ENCODE measurements at regions of chr12 and their contacts with region 1.

Region 1: GRCh38 chr12:90299121-90299520 is 590.5 kb upstream of the ATP2B1 start:
- DNase-seq: no peak
- H3K4me3 Mint-ChIP-seq: peak overlapping the region; percentile 25
- H3K27ac Mint-ChIP-seq: no peak overlapping the region
- H3K4me1 Mint-ChIP-seq: peaks cover 19% of the 10 kb centered on the region
- H3K27me3 Mint-ChIP-seq: peaks cover 15% of the 10 kb centered on the region

Region 2: GRCh38 chr12:90188857-90189256 is 110.3 kb before region 1 on chr12:
- CTCF ChIA-PET with region 1: no interaction called
- POLR2A ChIA-PET with region 1: no interaction called
- intact Hi-C with region 1: no loop called
- DNase-seq: no peak
- H3K4me3 Mint-ChIP-seq: no peak overlapping the region
- H3K27ac Mint-ChIP-seq: no peak overlapping the region
- H3K4me1 Mint-ChIP-seq: no peaks in the 10 kb centered on the region
- H3K27me3 Mint-ChIP-seq: peaks cover 3% of the 10 kb centered on the region

Region 3: GRCh38 chr12:90280564-90281058 is 18.5 kb before region 1 on chr12:
- CTCF ChIA-PET with region 1: no interaction called
- POLR2A ChIA-PET with region 1: interaction called, 4 read pairs
- intact Hi-C with region 1: loop called (anchors 1 kb)
- DNase-seq: peak; percentile 37
- H3K4me3 Mint-ChIP-seq: no peak overlapping the region
- H3K27ac Mint-ChIP-seq: peak overlapping the region; percentile 13
- H3K4me1 Mint-ChIP-seq: peaks cover 16% of the 10 kb centered on the region
- H3K27me3 Mint-ChIP-seq: peaks cover 5% of the 10 kb centered on the region

Region 4: GRCh38 chr12:90896164-90896563 is 597.0 kb after region 1 on chr12:
- CTCF ChIA-PET with region 1: no interaction called
- POLR2A ChIA-PET with region 1: no interaction called
- intact Hi-C with region 1: no loop called
- DNase-seq: no peak
- H3K4me3 Mint-ChIP-seq: no peak overlapping the region
- H3K27ac Mint-ChIP-seq: no peak overlapping the region
- H3K4me1 Mint-ChIP-seq: no peaks in the 10 kb centered on the region
- H3K27me3 Mint-ChIP-seq: peaks cover 8% of the 10 kb centered on the region

Region 5: DNA sequence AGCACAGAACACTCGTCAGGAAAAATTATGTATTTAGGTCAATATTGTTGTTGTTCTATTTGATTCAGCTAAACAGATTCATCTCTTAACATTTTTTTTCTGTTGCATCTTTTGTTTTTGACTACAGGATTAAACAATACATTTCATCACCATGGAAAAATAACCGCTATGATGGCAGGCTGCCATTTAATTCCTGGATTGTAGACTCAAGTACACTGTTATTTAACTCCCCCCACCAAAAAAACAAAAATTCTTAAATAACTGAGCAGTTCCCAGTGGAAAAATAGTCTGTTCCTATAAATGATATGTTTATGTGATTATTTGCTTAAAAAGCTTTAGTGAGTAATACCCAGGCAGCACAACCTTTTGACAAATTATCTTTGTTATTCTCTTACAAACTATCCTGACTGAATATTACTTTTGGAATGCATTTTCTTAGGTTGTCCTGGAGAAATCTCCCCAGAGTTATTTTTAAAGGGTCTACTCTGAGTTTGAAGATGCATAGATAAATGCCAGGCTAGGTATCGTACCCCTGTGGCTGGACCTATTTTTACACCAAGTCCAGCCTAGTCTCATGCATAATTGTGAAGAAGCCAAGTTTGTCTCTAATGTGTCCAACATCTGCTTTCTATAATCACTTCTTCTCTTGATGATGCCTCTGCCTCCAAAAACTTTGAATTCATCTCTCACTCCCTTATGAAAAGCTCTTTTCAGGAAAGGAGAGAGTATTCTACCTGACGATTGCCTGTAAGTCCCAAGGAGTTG is 755.0 kb after region 1 on chr12:
- CTCF ChIA-PET with region 1: no interaction called
- POLR2A ChIA-PET with region 1: no interaction called
- intact Hi-C with region 1: no loop called
- DNase-seq: no peak
- H3K4me3 Mint-ChIP-seq: no peak overlapping the region
- H3K27ac Mint-ChIP-seq: no peak overlapping the region
- H3K4me1 Mint-ChIP-seq: no peaks in the 10 kb centered on the region
- H3K27me3 Mint-ChIP-seq: peaks cover 6% of the 10 kb centered on the region